PC-3 (cell line): ENCODE measurements at regions of chr11 and their contacts with region 1.

Region 1: GRCh38 chr11:74948898-74949747 is at the starts of genes SPCS2 and XRRA1:
- DNase-seq: peak; percentile 99
- ATAC-seq: peak; percentile 99
- H3K4me3 ChIP-seq: peak within 1 kb of the TSS; percentile 87
- H3K27ac ChIP-seq: peak within 1 kb of the TSS; percentile 34
- H3K4me1 ChIP-seq: peaks cover 24% of the 10 kb centered on the region
- H3K27me3 ChIP-seq: no peaks in the 10 kb centered on the region
- CTCF ChIP-seq: no peak
- total RNA-seq, gene SPCS2: 129 and 142 TPM in 2 replicates
- total RNA-seq, gene XRRA1: 18.1 and 23.5 TPM in 2 replicates

Region 2: DNA sequence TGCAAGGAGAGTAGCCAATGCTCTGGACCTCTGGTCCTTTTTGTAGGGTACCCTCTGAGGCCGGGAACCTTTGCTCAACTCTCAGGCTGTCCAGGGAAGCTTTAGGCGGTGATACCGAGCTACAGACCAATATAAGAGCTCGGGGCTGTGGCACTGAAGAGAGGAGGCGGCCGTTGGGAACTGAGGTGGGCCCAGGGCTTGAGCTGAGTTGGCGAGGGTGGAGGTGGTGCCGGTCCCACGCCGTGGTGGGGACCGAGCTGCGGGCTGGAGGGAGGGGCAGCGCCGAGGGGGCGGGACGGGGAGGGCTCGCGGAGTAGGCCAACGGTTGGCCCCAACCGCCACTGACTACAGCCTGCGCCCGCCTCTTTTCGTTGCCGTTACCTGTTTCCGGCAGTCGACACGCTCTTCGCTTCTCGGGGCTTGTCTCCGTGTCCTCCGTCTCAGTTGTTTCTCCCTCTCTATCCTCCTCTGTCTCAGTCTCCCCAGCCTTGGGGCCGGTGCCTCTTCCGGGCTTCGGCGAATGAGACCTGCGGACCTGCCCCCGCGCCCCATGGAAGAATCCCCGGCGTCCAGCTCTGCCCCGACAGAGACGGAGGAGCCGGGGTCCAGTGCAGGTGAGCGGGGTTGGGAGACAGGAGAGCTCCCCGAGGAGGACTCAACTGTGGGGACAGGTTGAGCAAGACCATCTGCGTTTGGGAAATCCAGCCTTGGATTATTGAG is 39.6 kb after region 1 on chr11 and contains the start of gene NEU3:
- CTCF ChIA-PET with region 1: no interaction called
- POLR2A ChIA-PET with region 1: no interaction called
- intact Hi-C with region 1: loop called (anchors 1 kb)
- DNase-seq: peak; percentile 88
- ATAC-seq: peak; percentile 93
- H3K4me3 ChIP-seq: peak within 1 kb of the TSS; percentile 94
- H3K27ac ChIP-seq: peak within 1 kb of the TSS; percentile 35
- H3K4me1 ChIP-seq: peaks cover 10% of the 10 kb centered on the region
- H3K27me3 ChIP-seq: no peaks in the 10 kb centered on the region
- CTCF ChIP-seq: no peak
- total RNA-seq, gene NEU3: 15.7 and 16.1 TPM in 2 replicates